ENCODE measurements at regions of chr16 and their contacts with region 1.

Region 1: GRCh38 chr16:57167953-57168352 is 17.9 kb downstream of the PSME3IP1 start:
- DNase-seq: no peak
- ATAC-seq: peak; percentile 89

Region 2: DNA sequence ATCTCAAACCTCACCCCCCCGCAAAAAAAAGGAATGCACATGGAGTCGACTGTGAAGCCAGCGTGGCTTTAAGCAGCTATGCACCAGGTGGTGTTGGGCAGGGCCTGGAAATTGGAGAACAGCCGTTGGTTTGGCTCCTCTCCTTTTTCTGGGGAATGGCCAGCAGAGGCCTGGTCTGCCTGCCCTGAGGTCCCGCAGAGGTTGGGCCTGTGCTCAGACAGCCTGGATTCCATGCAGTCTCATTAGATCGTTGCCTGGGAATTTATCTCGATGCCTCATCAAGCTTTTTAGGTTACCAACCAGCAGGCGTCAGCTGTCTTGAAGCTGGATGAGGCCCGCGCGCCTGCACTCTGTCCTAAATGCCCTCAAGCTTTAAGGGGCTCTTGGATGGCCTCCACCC is 293.2 kb before region 1 on chr16:
- intact Hi-C with region 1: no loop called
- DNase-seq: no peak
- ATAC-seq: peak; percentile 59

Region 3: GRCh38 chr16:57089406-57089805 is 78.5 kb before region 1 on chr16:
- intact Hi-C with region 1: loop called (anchors 5 kb)
- DNase-seq: no peak
- ATAC-seq: no peak